Activated CD8-positive, alpha-beta T cell treated with anti-CD3 and anti-CD28 coated beads for 36 hours (primary cell): ENCODE measurements at regions of chr22 and their contacts with region 1.

Region 1: GRCh38 chr22:50030297-50031188 is 18.0 kb upstream of the IL17REL start:
- DNase-seq: peak; percentile 91
- ATAC-seq: peak; percentile 95
- H3K4me3 Mint-ChIP-seq: no peak overlapping the region
- H3K27ac Mint-ChIP-seq: no peak overlapping the region
- H3K4me1 Mint-ChIP-seq: peaks cover 17% of the 10 kb centered on the region
- H3K27me3 Mint-ChIP-seq: no peaks in the 10 kb centered on the region
- CTCF ChIP-seq: peak; percentile 95

Region 2: DNA sequence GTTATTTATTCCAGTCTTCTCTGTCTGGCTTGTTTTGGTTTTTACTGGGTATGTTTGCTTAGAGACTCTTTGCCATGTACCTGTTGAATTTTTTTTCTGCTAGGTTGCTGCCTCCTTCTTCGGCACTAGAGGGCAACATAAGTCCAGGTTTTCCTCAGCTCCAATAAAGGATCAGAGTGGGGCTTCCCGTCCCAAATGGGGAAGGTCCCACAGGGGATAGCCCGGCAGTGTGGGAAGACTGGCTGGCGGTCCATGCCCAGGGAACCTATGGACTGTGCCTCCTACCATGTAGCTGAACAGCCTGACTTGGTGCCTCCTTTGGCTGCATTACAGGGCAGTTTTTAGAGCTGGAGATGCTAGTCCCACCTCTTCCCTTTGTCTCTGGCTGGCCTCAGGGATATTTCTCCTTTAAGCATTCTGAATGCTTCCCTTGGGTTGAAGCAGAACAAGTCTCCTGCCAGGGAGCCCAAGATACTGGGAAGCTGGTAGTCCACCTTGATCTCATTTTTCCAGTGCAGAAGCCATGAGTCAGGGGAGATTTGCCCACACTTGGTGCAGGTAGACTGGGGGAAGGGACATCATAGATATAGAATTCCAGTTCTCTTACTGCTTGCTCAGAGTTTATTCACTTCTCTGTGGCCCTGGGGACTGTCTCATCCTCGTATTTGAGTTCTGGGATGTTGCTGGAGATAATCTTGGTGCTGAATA is 263.0 kb before region 1 on chr22:
- CTCF ChIA-PET with region 1: interaction called, 10 read pairs
- POLR2A ChIA-PET with region 1: no interaction called
- intact Hi-C with region 1: no loop called
- DNase-seq: peak; percentile 33
- ATAC-seq: peak; percentile 74
- H3K4me3 Mint-ChIP-seq: no peak overlapping the region
- H3K27ac Mint-ChIP-seq: no peak overlapping the region
- H3K4me1 Mint-ChIP-seq: peaks cover 5% of the 10 kb centered on the region
- H3K27me3 Mint-ChIP-seq: no peaks in the 10 kb centered on the region
- CTCF ChIP-seq: peak; percentile 92

Region 3: DNA sequence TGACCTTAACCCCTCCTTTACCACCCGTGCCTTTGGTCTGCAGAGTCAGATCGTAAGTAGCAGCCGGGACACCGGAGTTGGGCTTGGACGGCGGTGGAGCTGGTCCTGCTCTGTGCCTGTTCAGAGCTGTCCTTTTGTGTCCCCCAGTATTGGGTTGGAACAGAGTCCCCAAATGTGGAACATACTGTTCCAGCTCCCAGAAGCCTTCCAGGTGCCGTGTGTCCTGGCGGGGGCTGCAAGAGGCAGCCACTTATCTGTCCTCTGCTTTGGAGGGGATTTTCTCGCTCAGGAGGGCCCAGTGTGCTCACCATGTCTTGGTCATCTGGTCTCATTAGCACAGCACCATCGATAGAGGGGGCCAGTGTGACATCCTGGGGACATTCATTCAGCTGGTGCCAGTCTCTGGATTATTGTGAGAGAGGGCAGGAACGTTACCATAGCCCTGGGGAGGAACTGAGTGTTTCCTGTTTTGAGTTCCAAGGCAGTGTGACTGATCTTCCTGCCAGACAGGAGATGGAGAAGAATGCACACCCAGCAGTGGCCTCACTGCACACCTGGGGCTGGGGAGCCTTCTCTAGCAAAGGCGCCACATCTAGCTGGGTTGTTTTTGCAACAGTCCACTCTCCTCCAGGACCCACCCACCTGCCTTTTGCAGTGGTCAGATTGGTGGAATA is 99.7 kb before region 1 on chr22:
- CTCF ChIA-PET with region 1: interaction called, 43 read pairs
- POLR2A ChIA-PET with region 1: interaction called, 3 read pairs
- intact Hi-C with region 1: loop called (anchors 1 kb)
- DNase-seq: peak; percentile 76
- ATAC-seq: peak; percentile 32
- H3K4me3 Mint-ChIP-seq: no peak overlapping the region
- H3K27ac Mint-ChIP-seq: peak overlapping the region; percentile 27
- H3K4me1 Mint-ChIP-seq: peaks cover 37% of the 10 kb centered on the region
- H3K27me3 Mint-ChIP-seq: no peaks in the 10 kb centered on the region
- CTCF ChIP-seq: peak; percentile 51

Region 4: GRCh38 chr22:49979587-49980264 is 50.8 kb before region 1 on chr22:
- CTCF ChIA-PET with region 1: interaction called, 14 read pairs
- POLR2A ChIA-PET with region 1: interaction called, 4 read pairs
- intact Hi-C with region 1: no loop called
- DNase-seq: peak; percentile 67
- ATAC-seq: peak; percentile 7
- H3K4me3 Mint-ChIP-seq: peak overlapping the region; percentile 7
- H3K27ac Mint-ChIP-seq: peak overlapping the region; percentile 72
- H3K4me1 Mint-ChIP-seq: peaks cover 42% of the 10 kb centered on the region
- H3K27me3 Mint-ChIP-seq: peaks cover 5% of the 10 kb centered on the region
- CTCF ChIP-seq: peak; percentile 65

Region 5: DNA sequence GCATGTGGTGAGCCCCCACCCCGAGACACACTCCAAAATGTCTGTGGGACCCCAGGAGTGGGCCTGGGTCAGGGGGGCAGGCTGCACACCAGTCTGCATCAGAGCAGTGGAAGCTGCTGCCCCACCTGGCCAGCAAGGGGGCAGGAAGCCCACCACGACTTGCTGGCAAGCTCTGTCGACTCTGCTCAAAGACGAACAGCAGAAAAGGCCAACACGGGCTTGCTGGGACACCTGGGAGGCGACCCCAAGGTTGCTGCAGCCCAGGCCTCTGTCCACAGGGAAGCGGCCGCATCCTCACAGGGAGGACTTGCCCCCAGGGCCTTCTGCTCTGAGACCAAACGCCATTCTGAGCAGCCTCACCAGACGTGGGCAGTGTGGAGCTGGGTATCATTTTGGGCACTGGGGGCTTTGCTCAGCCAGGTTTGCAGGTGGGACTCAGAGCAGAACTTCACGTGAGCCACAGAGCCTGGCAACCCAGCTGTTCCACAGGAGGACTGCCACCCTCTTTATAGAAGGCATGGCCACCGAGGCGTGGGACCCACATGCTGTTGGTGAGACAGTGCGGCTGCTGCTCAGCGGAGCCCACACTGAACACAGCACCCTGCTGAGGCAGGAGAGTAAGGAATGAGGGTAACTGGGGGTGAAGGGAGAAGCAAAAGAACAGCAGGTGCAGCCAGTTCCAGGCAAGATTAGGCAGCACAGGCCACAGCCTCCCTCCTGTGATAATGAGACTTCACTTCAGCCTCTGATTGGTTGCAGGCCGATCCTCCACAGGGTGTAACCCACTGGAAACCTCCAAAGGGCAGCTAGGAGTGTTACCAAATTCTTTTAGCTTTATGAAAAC is 28.9 kb before region 1 on chr22:
- CTCF ChIA-PET with region 1: interaction called, 63 read pairs
- POLR2A ChIA-PET with region 1: interaction called, 3 read pairs
- intact Hi-C with region 1: no loop called
- DNase-seq: no peak
- ATAC-seq: no peak
- H3K4me3 Mint-ChIP-seq: no peak overlapping the region
- H3K27ac Mint-ChIP-seq: no peak overlapping the region
- H3K4me1 Mint-ChIP-seq: peaks cover 10% of the 10 kb centered on the region
- H3K27me3 Mint-ChIP-seq: peaks cover 11% of the 10 kb centered on the region
- CTCF ChIP-seq: no peak

Region 6: GRCh38 chr22:50085211-50085972 is 54.8 kb after region 1 on chr22 and contains the start of gene MLC1:
- CTCF ChIA-PET with region 1: interaction called, 11 read pairs
- POLR2A ChIA-PET with region 1: interaction called, 4 read pairs
- intact Hi-C with region 1: no loop called
- DNase-seq: peak; percentile 63
- ATAC-seq: no peak
- H3K4me3 Mint-ChIP-seq: no peak within 1 kb of the TSS
- H3K27ac Mint-ChIP-seq: peak within 1 kb of the TSS; percentile 73
- H3K4me1 Mint-ChIP-seq: peaks cover 4% of the 10 kb centered on the region
- H3K27me3 Mint-ChIP-seq: peaks cover 11% of the 10 kb centered on the region
- CTCF ChIP-seq: no peak
- total RNA-seq, gene MLC1: 1.3 to 1.5 TPM